K562 (cell line): ENCODE measurements at regions of chr2 and their contacts with region 1.

Region 1: GRCh38 chr2:127362971-127363370 is 24.8 kb downstream of the MAP3K2 start:
- DNase-seq: no peak
- ATAC-seq: no peak
- H3K4me3 ChIP-seq: no peak overlapping the region
- H3K27ac ChIP-seq: no peak overlapping the region
- H3K4me1 ChIP-seq: no peaks in the 10 kb centered on the region
- H3K27me3 ChIP-seq: no peaks in the 10 kb centered on the region
- CTCF ChIP-seq: no peak
- EP300 ChIP-seq: no peak
- POLR2A ChIP-seq: no peak
- RAD21 ChIP-seq: no peak

Region 2: DNA sequence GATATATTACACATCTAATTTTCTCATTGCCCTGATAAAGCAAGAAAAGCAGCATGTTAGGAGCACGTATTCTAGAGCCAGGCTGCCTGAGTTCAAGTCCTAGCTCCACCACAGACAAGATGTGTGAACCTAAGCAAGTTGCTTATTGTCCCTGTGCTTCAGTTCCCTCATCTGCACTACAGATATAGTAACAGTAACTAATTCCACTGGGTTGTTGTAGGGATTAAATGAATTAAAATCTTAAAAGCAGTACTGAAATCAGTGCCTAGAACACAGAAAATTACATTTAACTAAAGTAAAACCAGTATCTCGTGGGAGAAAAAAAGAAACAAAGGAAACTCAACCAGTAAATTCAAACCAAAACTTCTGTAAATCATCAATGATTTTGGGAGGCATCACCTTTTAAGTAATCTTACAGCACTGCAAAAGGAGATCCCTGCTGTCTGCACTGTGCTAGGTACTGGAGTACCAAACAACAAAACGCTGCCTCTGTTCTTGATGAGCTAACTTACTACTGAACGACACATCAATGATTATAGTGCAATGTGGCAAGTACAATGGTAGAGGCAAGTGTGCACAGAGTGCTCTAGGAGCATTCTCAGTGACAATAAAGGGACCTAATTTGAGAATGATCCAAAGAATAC is 16.9 kb after region 1 on chr2:
- CTCF ChIA-PET with region 1: no interaction called
- POLR2A ChIA-PET with region 1: interaction called, 4 read pairs
- in situ Hi-C with region 1: no loop called
- intact Hi-C with region 1: loop called (anchors 2 kb)
- DNase-seq: no peak
- ATAC-seq: no peak; the same call in 2 of the 3 replicates
- H3K4me3 ChIP-seq: no peak overlapping the region
- H3K27ac ChIP-seq: no peak overlapping the region
- H3K4me1 ChIP-seq: no peaks in the 10 kb centered on the region
- H3K27me3 ChIP-seq: no peaks in the 10 kb centered on the region
- CTCF ChIP-seq: no peak
- EP300 ChIP-seq: no peak
- POLR2A ChIP-seq: no peak
- RAD21 ChIP-seq: no peak